Panc1 (cell line): ENCODE measurements at regions of chr3 and their contacts with region 1.

Region 1: GRCh38 chr3:156311930-156312329 is 191.6 kb downstream of the KCNAB1 start:
- DNase-seq: no peak
- ATAC-seq: no peak
- H3K4me3 ChIP-seq: no peak overlapping the region
- H3K27ac ChIP-seq: no peak overlapping the region
- H3K4me1 ChIP-seq: no peaks in the 10 kb centered on the region
- H3K27me3 ChIP-seq: no peaks in the 10 kb centered on the region; the same call in 1 of the 2 replicates
- CTCF ChIP-seq: no peak

Region 2: DNA sequence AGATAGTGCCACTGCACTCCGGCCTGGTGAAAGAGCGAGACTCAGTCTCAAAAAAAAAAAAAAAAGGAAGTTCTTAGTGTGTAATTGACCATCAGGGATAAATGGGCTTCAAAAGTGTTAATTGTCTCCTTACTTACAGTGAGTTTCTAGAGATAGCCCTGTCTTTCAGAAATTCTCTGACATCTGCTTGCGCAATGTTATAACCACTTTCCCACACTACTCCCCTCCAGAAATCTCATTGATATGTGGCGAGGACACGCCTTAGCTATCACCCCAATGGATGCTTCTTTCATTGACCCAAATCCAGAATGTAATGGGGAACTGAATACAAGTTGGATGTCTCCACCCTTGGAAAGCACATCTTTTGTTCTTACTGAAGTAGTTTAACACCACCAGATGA is 370.6 kb before region 1 on chr3:
- CTCF ChIA-PET with region 1: no interaction called
- POLR2A ChIA-PET with region 1: interaction called, 14 read pairs
- in situ Hi-C with region 1: no loop called
- intact Hi-C with region 1: no loop called
- DNase-seq: no peak
- ATAC-seq: no peak
- H3K4me3 ChIP-seq: no peak overlapping the region
- H3K27ac ChIP-seq: no peak overlapping the region
- H3K4me1 ChIP-seq: no peaks in the 10 kb centered on the region
- H3K27me3 ChIP-seq: no peaks in the 10 kb centered on the region
- CTCF ChIP-seq: no peak

Region 3: GRCh38 chr3:155995525-155996351 is 316.2 kb before region 1 on chr3:
- CTCF ChIA-PET with region 1: no interaction called
- POLR2A ChIA-PET with region 1: no interaction called
- in situ Hi-C with region 1: no loop called
- intact Hi-C with region 1: no loop called
- DNase-seq: peak; percentile 5
- ATAC-seq: peak; percentile 93
- H3K4me3 ChIP-seq: no peak overlapping the region
- H3K27ac ChIP-seq: no peak overlapping the region
- H3K4me1 ChIP-seq: no peaks in the 10 kb centered on the region
- H3K27me3 ChIP-seq: peaks cover 6% of the 10 kb centered on the region
- CTCF ChIP-seq: peak; percentile 62

Region 4: GRCh38 chr3:156253150-156253549 is 58.8 kb before region 1 on chr3:
- CTCF ChIA-PET with region 1: no interaction called
- POLR2A ChIA-PET with region 1: no interaction called
- in situ Hi-C with region 1: no loop called
- intact Hi-C with region 1: no loop called
- DNase-seq: no peak
- ATAC-seq: no peak
- H3K4me3 ChIP-seq: no peak overlapping the region
- H3K27ac ChIP-seq: no peak overlapping the region
- H3K4me1 ChIP-seq: no peaks in the 10 kb centered on the region
- H3K27me3 ChIP-seq: peaks cover 2% of the 10 kb centered on the region; the same call in 1 of the 2 replicates
- CTCF ChIP-seq: no peak

Region 5: DNA sequence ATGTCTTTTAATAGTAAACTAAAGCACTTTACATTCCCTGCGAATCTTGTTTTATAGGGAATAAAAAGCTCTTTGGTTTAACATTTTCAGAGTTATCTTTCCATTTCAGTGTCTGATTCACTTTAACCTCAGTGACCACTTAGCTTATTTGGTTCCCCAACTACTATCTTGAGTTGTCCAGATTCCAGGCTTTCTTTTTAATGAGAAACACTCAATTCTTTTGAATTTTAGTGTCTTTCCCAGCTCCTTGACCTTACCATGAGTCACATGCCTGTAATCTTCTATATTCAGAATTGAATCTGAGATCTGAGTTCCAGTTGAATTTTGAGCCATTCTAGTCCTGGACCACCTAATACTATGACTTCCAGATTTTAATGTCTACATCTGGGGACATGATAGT is 47.2 kb before region 1 on chr3:
- CTCF ChIA-PET with region 1: no interaction called
- POLR2A ChIA-PET with region 1: no interaction called
- in situ Hi-C with region 1: no loop called
- intact Hi-C with region 1: no loop called
- DNase-seq: no peak
- ATAC-seq: no peak
- H3K4me3 ChIP-seq: no peak overlapping the region
- H3K27ac ChIP-seq: no peak overlapping the region
- H3K4me1 ChIP-seq: no peaks in the 10 kb centered on the region
- H3K27me3 ChIP-seq: 0 out of 2 replicates have a peak, but pooled peaks cover 2% of the 10 kb centered on the region
- CTCF ChIP-seq: no peak

Region 6: DNA sequence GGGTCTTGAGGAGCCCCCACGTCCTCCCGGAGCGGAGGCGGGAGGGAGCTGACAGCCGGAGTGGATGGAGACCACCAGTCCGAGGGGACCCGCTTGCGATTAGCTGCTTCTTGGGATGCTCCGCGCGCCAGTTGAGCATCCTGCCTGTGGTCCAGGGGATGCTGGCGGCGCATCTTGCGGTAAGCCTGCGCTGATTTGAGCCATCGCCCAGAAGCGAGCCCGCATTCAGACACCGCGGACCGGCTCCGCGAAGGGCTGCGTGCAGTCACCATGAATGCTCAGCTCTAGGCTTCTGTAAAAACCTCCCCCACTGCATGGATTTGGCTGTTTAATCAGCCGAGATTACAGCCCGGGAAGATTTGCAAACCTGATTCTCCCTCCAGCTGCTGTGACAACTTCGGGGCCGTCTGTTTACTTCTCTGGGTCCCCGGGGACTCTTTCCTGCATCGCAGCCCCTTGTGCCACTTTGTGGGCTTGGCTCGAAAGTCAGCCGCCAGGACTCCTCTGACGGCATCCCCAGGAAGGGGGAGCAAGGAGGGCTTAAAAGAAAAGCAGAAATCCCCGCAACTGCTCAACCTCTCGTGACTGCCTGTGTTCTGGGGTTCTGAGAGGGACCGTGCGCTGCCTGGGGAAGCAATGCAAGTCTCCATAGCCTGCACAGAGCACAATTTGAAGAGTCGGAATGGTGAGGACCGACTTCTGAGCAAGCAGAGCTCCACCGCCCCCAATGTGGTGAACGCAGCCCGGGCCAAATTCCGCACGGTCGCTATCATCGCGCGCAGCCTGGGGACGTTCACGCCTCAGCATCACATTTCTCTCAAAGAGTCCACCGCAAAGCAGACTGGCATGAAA is 20.4 kb before region 1 on chr3:
- CTCF ChIA-PET with region 1: no interaction called
- POLR2A ChIA-PET with region 1: no interaction called
- in situ Hi-C with region 1: no loop called
- intact Hi-C with region 1: no loop called
- DNase-seq: no peak
- ATAC-seq: peak; percentile 60
- H3K4me3 ChIP-seq: peak overlapping the region in 1 of 2 experiments; percentile 36; a peak in 1 of 4 replicates
- H3K27ac ChIP-seq: no peak overlapping the region
- H3K4me1 ChIP-seq: no peaks in the 10 kb centered on the region; the same call in 1 of the 2 replicates
- H3K27me3 ChIP-seq: peaks cover 46% of the 10 kb centered on the region
- CTCF ChIP-seq: no peak